MCF 10A (cell line): ENCODE measurements at regions of chr5 and their contacts with region 1.

Region 1: GRCh38 chr5:89179731-89180130 is 296.7 kb upstream of the MEF2C start:
- DNase-seq: no peak
- H3K4me3 Mint-ChIP-seq: no peak overlapping the region
- H3K27ac Mint-ChIP-seq: no peak overlapping the region
- H3K4me1 Mint-ChIP-seq: no peaks in the 10 kb centered on the region
- H3K27me3 Mint-ChIP-seq: no peaks in the 10 kb centered on the region
- CTCF ChIP-seq: no peak

Region 2: DNA sequence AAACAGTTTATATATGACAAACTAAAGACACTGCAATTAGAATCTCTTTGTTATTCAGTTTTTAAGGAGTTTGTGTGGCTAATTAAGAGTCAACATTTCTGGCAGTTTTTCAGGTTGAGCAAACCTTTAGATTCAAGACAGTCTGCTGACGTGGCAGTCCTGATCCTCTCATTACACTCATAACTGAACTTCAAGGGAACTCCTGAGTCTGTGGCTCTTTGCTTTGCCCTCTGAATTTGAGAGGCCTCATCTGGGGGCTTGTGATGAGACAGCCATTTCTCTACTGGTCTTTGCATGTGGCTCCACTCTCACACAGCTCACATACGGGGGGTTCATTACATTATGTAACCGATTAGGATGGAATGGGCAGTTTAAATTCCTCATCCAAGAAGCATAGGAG is 113.8 kb before region 1 on chr5:
- CTCF ChIA-PET with region 1: no interaction called
- POLR2A ChIA-PET with region 1: no interaction called
- intact Hi-C with region 1: no loop called
- DNase-seq: no peak
- H3K4me3 Mint-ChIP-seq: no peak overlapping the region
- H3K27ac Mint-ChIP-seq: no peak overlapping the region
- H3K4me1 Mint-ChIP-seq: no peaks in the 10 kb centered on the region
- H3K27me3 Mint-ChIP-seq: peaks cover 7% of the 10 kb centered on the region
- CTCF ChIP-seq: no peak

Region 3: GRCh38 chr5:89232139-89232603 is 52.4 kb after region 1 on chr5:
- CTCF ChIA-PET with region 1: no interaction called
- POLR2A ChIA-PET with region 1: no interaction called
- intact Hi-C with region 1: loop called (anchors 10 kb)
- DNase-seq: no peak
- H3K4me3 Mint-ChIP-seq: no peak overlapping the region
- H3K27ac Mint-ChIP-seq: no peak overlapping the region
- H3K4me1 Mint-ChIP-seq: no peaks in the 10 kb centered on the region
- H3K27me3 Mint-ChIP-seq: no peaks in the 10 kb centered on the region
- CTCF ChIP-seq: no peak

Region 4: GRCh38 chr5:89534331-89534730 is 354.6 kb after region 1 on chr5:
- CTCF ChIA-PET with region 1: no interaction called
- POLR2A ChIA-PET with region 1: no interaction called
- intact Hi-C with region 1: no loop called
- DNase-seq: no peak
- H3K4me3 Mint-ChIP-seq: no peak overlapping the region
- H3K27ac Mint-ChIP-seq: no peak overlapping the region
- H3K4me1 Mint-ChIP-seq: no peaks in the 10 kb centered on the region
- H3K27me3 Mint-ChIP-seq: no peaks in the 10 kb centered on the region
- CTCF ChIP-seq: no peak